Ovary (tissue), 10 donors: ENCODE measurements at regions of chr6 and their contacts with region 1.

Region 1: DNA sequence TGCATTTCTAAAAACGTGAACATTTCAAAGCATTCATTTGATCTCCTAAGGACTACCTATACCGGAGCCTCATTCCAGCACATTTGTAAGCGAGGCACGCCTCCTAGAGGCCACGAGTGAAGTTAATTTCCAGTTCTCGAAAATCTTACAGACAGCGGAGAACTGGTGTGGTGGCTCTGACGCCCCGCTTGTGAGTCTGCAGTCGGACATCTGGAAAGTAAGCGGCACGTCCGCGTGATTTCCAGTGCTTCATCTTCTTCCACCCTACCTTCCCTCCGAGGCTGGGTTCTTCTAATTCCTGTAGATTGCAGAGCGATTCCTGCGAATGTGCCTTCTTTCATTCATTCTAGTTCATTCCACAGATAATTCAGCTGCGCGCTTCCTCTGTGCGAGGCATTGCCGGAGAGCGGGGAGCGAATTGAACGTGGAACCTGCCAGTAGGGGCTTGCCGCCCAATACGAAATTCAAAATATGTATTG is 810 bp upstream of the PRIM2 start:
- DNase-seq: peak; percentile 69 to 86 (median 83)
- H3K4me3 ChIP-seq: peak overlapping the region; percentile 63
- H3K27ac ChIP-seq: no peak overlapping the region
- H3K4me1 ChIP-seq: peaks cover 4% of the 10 kb centered on the region
- H3K27me3 ChIP-seq: no peaks in the 10 kb centered on the region
- CTCF ChIP-seq: peak; percentile 73 to 87 (median 83)
- EP300 ChIP-seq: no peak
- POLR2A ChIP-seq: no peak

Region 2: DNA sequence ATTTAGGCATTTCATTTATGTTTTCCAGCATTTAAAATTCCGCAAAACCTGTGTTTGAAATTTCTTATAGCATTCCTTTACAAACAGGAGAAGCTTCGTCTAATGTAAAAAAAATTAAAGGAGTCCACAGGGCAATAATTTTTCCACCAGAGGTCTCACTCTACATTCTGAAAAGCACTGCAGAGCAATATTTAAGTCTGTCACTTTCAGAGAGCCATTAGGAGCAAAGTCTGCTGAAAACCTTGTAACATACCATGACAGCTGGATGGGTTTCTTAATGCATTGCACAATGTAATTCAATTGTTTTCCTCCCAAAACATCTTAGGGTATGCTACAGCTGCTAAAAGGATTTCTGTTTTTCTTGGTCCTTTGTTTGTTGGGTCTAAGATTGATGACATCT is 126.5 kb before region 1 on chr6:
- intact Hi-C with region 1: loop called in 2 of 4 experiments (anchors 10 kb)
- DNase-seq: no peak
- H3K4me3 ChIP-seq: no peak overlapping the region
- H3K27ac ChIP-seq: no peak overlapping the region
- H3K4me1 ChIP-seq: no peaks in the 10 kb centered on the region
- H3K27me3 ChIP-seq: no peaks in the 10 kb centered on the region
- CTCF ChIP-seq: peak in 2 of 3 donors; percentile 16 to 47
- EP300 ChIP-seq: no peak
- POLR2A ChIP-seq: no peak

Region 3: GRCh38 chr6:57216235-57217101 is 100.2 kb before region 1 on chr6:
- intact Hi-C with region 1: loop called in 1 of 4 experiments (anchors 10 kb)
- DNase-seq: no peak
- H3K4me3 ChIP-seq: no peak overlapping the region
- H3K27ac ChIP-seq: no peak overlapping the region
- H3K4me1 ChIP-seq: peaks cover 1% of the 10 kb centered on the region
- H3K27me3 ChIP-seq: no peaks in the 10 kb centered on the region
- CTCF ChIP-seq: no peak
- EP300 ChIP-seq: no peak
- POLR2A ChIP-seq: no peak

Region 4: GRCh38 chr6:57257911-57258541 is 58.6 kb before region 1 on chr6:
- intact Hi-C with region 1: loop called in 1 of 4 experiments (anchors 10 kb)
- DNase-seq: no peak
- H3K4me3 ChIP-seq: peak overlapping the region; percentile 25
- H3K27ac ChIP-seq: peak overlapping the region; percentile 14 to 86
- H3K4me1 ChIP-seq: peaks cover 13% of the 10 kb centered on the region
- H3K27me3 ChIP-seq: no peaks in the 10 kb centered on the region
- CTCF ChIP-seq: no peak
- EP300 ChIP-seq: no peak
- POLR2A ChIP-seq: no peak

Region 5: GRCh38 chr6:57283911-57284455 is 32.6 kb before region 1 on chr6:
- intact Hi-C with region 1: no loop called
- DNase-seq: no peak
- H3K4me3 ChIP-seq: no peak overlapping the region
- H3K27ac ChIP-seq: no peak overlapping the region
- H3K4me1 ChIP-seq: no peaks in the 10 kb centered on the region
- H3K27me3 ChIP-seq: no peaks in the 10 kb centered on the region
- CTCF ChIP-seq: no peak
- EP300 ChIP-seq: no peak
- POLR2A ChIP-seq: no peak